ENCODE measurements at regions of chr9 and their contacts with region 1.

Region 1: GRCh38 chr9:129282272-129283211 is 104.5 kb upstream of the IER5L start:
- DNase-seq: peak in 4 of 7 donors; percentile 15 to 47 (median 18)
- H3K4me3 ChIP-seq: peak overlapping the region in 1 of 4 donors; percentile 51
- H3K27ac ChIP-seq: peak overlapping the region in 2 of 5 donors; percentile 36 to 59
- H3K4me1 ChIP-seq: no peaks in the 10 kb centered on the region
- H3K27me3 ChIP-seq: no peaks in the 10 kb centered on the region
- CTCF ChIP-seq: no peak
- POLR2A ChIP-seq: no peak

Region 2: DNA sequence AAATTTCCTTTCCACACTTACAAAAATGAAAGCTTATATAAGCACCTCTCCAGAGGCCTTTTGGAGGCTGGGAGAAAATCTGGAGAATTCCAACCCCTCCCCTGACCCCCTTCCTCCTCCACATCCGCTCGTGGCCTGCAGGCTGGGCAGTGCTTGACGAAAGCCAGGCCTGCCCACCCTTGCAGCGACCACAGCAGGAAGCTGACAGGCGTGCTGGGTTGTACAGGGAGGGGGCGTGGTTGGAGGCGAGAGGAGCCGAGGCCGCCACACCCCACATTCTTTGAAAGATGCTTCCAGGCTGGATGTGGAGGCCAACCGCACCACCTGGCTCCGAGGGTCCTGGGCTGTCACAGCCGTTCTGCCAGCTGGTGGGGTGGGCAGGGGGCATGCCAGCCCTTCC is 56.7 kb before region 1 on chr9:
- intact Hi-C with region 1: loop called in 1 of 2 experiments (anchors 10 kb)
- DNase-seq: peak in 6 of 7 donors; percentile 46 to 71 (median 54)
- H3K4me3 ChIP-seq: no peak overlapping the region
- H3K27ac ChIP-seq: peak overlapping the region in 2 of 5 donors; percentile 50 to 80
- H3K4me1 ChIP-seq: peaks cover 4 to 5% of the 10 kb centered on the region in 2 donors
- H3K27me3 ChIP-seq: no peaks in the 10 kb centered on the region
- CTCF ChIP-seq: no peak
- POLR2A ChIP-seq: no peak